ENCODE measurements at regions of chr16 and their contacts with region 1.

Region 1: DNA sequence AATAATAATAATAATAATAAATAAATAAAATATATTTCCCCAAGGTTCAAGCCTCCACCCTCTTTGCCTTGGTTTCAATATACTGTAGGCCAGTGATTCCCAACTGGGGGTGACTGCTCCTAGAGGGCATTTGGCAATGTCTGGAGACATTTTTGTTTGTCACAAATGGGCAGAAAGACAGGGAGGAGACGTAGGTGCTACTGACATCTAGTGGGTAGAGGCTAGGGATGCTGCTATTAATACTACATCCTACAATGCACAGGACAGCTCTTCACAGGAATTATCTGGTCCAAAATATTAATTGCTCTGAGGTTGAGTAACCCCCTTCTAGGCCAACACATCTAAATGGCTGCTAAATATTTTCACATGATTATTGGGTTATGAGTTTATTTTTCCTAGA is 12.8 kb upstream of the PRR14 start:
- DNase-seq: no peak

Region 2: GRCh38 chr16:30585400-30586189 is 52.3 kb before region 1 on chr16 and contains the start of gene ZNF785:
- intact Hi-C with region 1: loop called in 1 of 2 experiments (anchors 10 kb)
- DNase-seq: peak; percentile 97
- total RNA-seq, gene ZNF785: 10.2 to 10.5 TPM